A673 (cell line): ENCODE measurements at regions of chr2 and their contacts with region 1.

Region 1: GRCh38 chr2:215311625-215312396 is at the start of gene ATIC:
- DNase-seq: peak; percentile 97
- H3K4me3 ChIP-seq: peak within 1 kb of the TSS; percentile 67
- H3K27ac ChIP-seq: peak within 1 kb of the TSS; percentile 78
- H3K4me1 ChIP-seq: peaks cover 15% of the 10 kb centered on the region
- H3K27me3 ChIP-seq: no peaks in the 10 kb centered on the region
- CTCF ChIP-seq: no peak
- total RNA-seq, gene ATIC: 328 and 333 TPM in 2 replicates

Region 2: GRCh38 chr2:214774108-214774507 is 537.7 kb before region 1 on chr2:
- CTCF ChIA-PET with region 1: no interaction called
- POLR2A ChIA-PET with region 1: interaction called, 10 read pairs
- intact Hi-C with region 1: no loop called
- DNase-seq: no peak
- H3K4me3 ChIP-seq: no peak overlapping the region
- H3K27ac ChIP-seq: no peak overlapping the region
- H3K4me1 ChIP-seq: peaks cover 11% of the 10 kb centered on the region
- H3K27me3 ChIP-seq: no peaks in the 10 kb centered on the region
- CTCF ChIP-seq: no peak